ENCODE measurements at regions of chr5 and their contacts with region 1.

Region 1: GRCh38 chr5:54492178-54492577 is 25.4 kb upstream of the SNX18 start:
- DNase-seq: no peak
- H3K4me3 Mint-ChIP-seq: no peak overlapping the region
- H3K27ac Mint-ChIP-seq: no peak overlapping the region
- H3K4me1 Mint-ChIP-seq: no peaks in the 10 kb centered on the region
- H3K27me3 Mint-ChIP-seq: no peaks in the 10 kb centered on the region

Region 2: GRCh38 chr5:53965459-53965858 is 526.7 kb before region 1 on chr5:
- CTCF ChIA-PET with region 1: no interaction called
- intact Hi-C with region 1: no loop called
- DNase-seq: no peak
- H3K4me3 Mint-ChIP-seq: no peak overlapping the region
- H3K27ac Mint-ChIP-seq: no peak overlapping the region
- H3K4me1 Mint-ChIP-seq: no peaks in the 10 kb centered on the region
- H3K27me3 Mint-ChIP-seq: no peaks in the 10 kb centered on the region

Region 3: DNA sequence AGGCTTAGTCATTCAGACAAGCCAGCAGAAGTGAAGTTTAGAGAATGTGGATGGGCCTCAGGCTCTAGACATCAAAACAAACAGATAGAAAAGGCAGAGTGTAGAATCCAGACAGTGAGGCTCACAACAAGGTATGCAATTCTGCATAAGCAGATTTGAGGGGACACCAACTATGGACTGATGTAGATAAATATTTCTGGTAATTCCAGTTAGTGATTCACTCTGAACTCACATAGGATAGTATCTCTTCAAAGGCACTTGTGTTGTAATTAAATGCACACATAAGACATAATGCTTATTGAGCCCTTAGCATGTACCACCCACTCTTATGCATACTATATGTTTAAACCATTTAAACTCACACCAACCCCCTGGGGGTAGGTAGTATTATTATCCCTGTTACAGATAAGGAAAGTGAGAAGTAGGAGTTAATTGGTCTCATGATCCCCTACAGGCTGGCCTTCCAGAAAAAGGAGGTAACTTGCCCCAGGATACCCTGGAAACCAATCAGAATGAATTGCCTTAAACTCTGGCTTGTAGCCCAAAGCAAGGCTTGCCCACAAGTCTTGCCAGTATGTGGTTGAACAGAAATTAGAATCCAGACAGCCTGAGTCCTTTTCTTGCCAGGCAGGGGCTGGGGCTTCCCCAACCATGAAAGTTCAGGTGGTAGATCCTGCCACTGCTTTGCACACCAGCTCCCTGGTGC is 76.1 kb before region 1 on chr5:
- CTCF ChIA-PET with region 1: interaction called, 13 read pairs
- intact Hi-C with region 1: loop called (anchors 2 kb)
- DNase-seq: peak; percentile 8
- H3K4me3 Mint-ChIP-seq: no peak overlapping the region
- H3K27ac Mint-ChIP-seq: no peak overlapping the region
- H3K4me1 Mint-ChIP-seq: no peaks in the 10 kb centered on the region
- H3K27me3 Mint-ChIP-seq: peaks cover 2% of the 10 kb centered on the region

Region 4: DNA sequence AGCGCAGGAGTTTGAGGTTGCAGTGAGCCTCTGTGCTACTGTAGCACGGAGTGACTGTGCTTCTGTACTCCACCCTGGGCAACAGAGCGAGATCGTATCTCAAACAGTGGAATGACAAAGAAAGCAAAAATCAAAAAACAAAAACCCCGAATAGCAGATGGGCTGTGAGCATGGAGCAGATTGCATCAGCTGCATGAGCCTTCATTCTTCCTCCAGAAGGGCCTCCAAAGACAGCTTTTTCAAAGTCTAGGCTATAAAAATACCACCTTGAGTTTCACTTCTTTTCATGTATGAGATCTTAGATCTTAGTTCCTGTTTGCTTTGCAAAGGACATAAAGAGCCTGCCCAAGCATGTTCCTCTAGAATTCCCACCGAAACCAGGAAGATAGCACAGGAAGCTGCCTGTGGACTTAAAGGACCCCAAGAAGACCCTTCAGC is 51.7 kb before region 1 on chr5:
- CTCF ChIA-PET with region 1: interaction called, 18 read pairs
- intact Hi-C with region 1: loop called (anchors 2 kb)
- DNase-seq: peak; percentile 48
- H3K4me3 Mint-ChIP-seq: peak overlapping the region; percentile 62
- H3K27ac Mint-ChIP-seq: peak overlapping the region; percentile 78
- H3K4me1 Mint-ChIP-seq: peaks cover 35% of the 10 kb centered on the region
- H3K27me3 Mint-ChIP-seq: no peaks in the 10 kb centered on the region

Region 5: DNA sequence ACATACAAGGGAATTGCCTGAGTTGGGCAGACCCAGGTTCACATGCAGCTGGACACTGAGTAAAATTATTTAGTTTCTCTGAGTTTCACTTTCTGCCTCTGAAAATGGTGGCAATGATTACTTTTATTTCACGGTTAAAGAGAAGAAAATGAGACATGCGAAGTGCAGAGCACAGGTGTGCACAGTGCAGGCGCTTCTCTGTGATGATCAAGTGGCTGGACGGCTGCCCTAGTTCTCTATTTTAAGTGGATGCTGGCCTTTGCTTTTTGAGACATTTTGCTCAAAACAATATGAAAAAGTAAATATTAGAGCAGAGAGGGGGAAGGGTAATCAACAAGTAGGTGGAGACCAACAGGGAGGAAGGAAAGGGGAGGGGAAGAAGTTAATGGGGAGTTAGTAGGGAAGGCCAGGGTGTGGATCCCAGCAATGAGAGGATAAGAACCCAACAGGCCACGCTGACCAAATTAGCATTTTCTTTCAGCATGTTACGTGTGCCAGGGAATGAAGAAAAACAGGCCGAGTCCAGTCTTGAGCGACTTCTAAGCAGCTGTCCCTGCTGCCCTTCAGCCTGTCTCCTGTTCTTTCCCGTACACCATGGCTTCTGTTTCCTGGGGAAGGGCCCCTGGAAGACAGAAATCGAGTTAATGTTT is 41.5 kb after region 1 on chr5:
- CTCF ChIA-PET with region 1: no interaction called
- intact Hi-C with region 1: no loop called
- DNase-seq: no peak
- H3K4me3 Mint-ChIP-seq: no peak overlapping the region
- H3K27ac Mint-ChIP-seq: no peak overlapping the region
- H3K4me1 Mint-ChIP-seq: peaks cover 38% of the 10 kb centered on the region
- H3K27me3 Mint-ChIP-seq: no peaks in the 10 kb centered on the region

Region 6: GRCh38 chr5:54844905-54845566 is 352.9 kb after region 1 on chr5:
- CTCF ChIA-PET with region 1: interaction called, 12 read pairs
- intact Hi-C with region 1: no loop called
- DNase-seq: no peak
- H3K4me3 Mint-ChIP-seq: no peak overlapping the region
- H3K27ac Mint-ChIP-seq: no peak overlapping the region
- H3K4me1 Mint-ChIP-seq: peaks cover 3% of the 10 kb centered on the region
- H3K27me3 Mint-ChIP-seq: peaks cover 7% of the 10 kb centered on the region

Region 7: GRCh38 chr5:55072666-55073065 is 580.5 kb after region 1 on chr5:
- CTCF ChIA-PET with region 1: no interaction called
- intact Hi-C with region 1: no loop called
- DNase-seq: no peak
- H3K4me3 Mint-ChIP-seq: no peak overlapping the region
- H3K27ac Mint-ChIP-seq: peak overlapping the region; percentile 34
- H3K4me1 Mint-ChIP-seq: peaks cover 33% of the 10 kb centered on the region
- H3K27me3 Mint-ChIP-seq: no peaks in the 10 kb centered on the region